Natural killer cell (primary cell): ENCODE measurements at regions of chr1 and their contacts with region 1.

Region 1: DNA sequence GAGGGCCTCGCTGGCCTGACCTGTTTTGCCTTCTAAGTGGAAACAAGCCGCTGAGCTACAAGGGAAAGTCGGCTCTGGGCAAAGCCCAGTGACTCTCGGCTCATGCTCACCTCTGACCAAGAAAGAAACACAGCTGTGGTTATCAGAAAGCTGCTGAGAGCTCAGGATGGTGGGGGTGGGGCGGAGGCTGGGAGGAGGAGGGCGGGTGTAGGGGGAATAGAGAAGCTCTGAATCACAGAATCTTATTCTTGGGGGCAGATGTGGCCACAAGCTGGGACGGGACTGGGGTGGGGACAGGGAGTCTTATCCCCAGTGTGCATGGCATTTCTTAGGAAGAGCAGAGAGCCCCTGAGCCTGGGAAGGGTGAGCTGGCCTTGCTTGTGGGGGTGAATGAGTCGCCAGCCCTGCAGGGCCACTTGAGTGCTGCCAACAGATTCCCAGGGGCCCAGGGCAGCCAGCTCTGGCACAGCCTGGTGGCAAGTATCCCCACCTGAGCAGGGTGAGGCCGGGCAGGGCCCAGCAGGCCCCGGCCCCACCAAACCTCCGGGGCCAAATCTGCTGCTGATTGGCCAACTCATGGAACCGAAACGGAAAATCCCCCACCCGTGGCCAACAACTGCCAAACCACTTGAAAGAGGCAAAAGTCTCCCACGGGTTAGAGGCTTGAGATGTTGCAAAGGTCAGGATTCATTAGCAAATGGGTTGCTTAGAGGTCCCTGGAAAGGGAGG is 120.6 kb downstream of the SPSB1 start:
- DNase-seq: peak; percentile 52 to 68
- ATAC-seq: peak; percentile 72 to 84 (median 77)
- H3K4me3 ChIP-seq: no peak overlapping the region
- H3K4me3 Mint-ChIP-seq: peak overlapping the region; percentile 72
- H3K27ac ChIP-seq: peak overlapping the region; percentile 64
- H3K27ac Mint-ChIP-seq: peak overlapping the region in 1 of 2 donors; percentile 65
- H3K4me1 ChIP-seq: peaks cover 39% of the 10 kb centered on the region
- H3K4me1 Mint-ChIP-seq: peaks cover 12 to 28% of the 10 kb centered on the region in 2 donors
- H3K27me3 ChIP-seq: peaks cover 8% of the 10 kb centered on the region
- H3K27me3 Mint-ChIP-seq: peaks cover 14 to 21% of the 10 kb centered on the region in 2 donors
- CTCF ChIP-seq: no peak

Region 2: DNA sequence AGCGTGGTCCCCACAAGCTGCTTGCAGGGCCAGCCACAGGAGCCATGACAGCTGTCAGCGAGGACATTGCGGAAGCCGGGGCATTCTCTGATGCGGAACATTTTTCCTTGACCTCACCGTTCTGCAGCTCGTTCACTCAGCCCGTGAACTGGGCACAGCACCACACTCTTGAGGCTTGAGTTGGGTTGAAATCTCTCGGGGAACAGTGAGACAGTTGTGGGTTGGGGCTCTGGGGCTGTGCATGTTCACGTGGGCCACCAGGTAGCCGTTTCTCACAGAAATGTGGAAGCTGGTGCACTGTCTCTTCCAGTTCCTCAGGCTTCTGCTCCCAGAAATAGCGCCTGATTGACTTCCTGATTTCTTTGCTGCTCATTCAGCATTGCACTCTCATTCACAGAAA is 50.8 kb before region 1 on chr1:
- intact Hi-C with region 1: no loop called
- DNase-seq: no peak
- ATAC-seq: no peak
- H3K4me3 ChIP-seq: no peak overlapping the region
- H3K4me3 Mint-ChIP-seq: no peak overlapping the region
- H3K27ac ChIP-seq: no peak overlapping the region
- H3K27ac Mint-ChIP-seq: no peak overlapping the region
- H3K4me1 ChIP-seq: peaks cover 14% of the 10 kb centered on the region
- H3K4me1 Mint-ChIP-seq: no peaks in the 10 kb centered on the region
- H3K27me3 ChIP-seq: no peaks in the 10 kb centered on the region
- H3K27me3 Mint-ChIP-seq: no peaks in the 10 kb centered on the region
- CTCF ChIP-seq: no peak

Region 3: GRCh38 chr1:9428601-9429341 is 15.5 kb after region 1 on chr1:
- intact Hi-C with region 1: loop called (anchors 2 kb)
- DNase-seq: peak; percentile 99 to 100
- ATAC-seq: peak; percentile 86 to 94 (median 92)
- H3K4me3 ChIP-seq: peak overlapping the region; percentile 44
- H3K4me3 Mint-ChIP-seq: peak overlapping the region; percentile 97
- H3K27ac ChIP-seq: peak overlapping the region; percentile 72
- H3K27ac Mint-ChIP-seq: peak overlapping the region; percentile 91
- H3K4me1 ChIP-seq: peaks cover 40% of the 10 kb centered on the region
- H3K4me1 Mint-ChIP-seq: peaks cover 37 to 41% of the 10 kb centered on the region in 2 donors
- H3K27me3 ChIP-seq: peaks cover 8% of the 10 kb centered on the region
- H3K27me3 Mint-ChIP-seq: peaks cover 0 to 28% of the 10 kb centered on the region in 2 donors
- CTCF ChIP-seq: no peak